A549 (cell line): ENCODE measurements at regions of chr19 and their contacts with region 1.

Region 1: DNA sequence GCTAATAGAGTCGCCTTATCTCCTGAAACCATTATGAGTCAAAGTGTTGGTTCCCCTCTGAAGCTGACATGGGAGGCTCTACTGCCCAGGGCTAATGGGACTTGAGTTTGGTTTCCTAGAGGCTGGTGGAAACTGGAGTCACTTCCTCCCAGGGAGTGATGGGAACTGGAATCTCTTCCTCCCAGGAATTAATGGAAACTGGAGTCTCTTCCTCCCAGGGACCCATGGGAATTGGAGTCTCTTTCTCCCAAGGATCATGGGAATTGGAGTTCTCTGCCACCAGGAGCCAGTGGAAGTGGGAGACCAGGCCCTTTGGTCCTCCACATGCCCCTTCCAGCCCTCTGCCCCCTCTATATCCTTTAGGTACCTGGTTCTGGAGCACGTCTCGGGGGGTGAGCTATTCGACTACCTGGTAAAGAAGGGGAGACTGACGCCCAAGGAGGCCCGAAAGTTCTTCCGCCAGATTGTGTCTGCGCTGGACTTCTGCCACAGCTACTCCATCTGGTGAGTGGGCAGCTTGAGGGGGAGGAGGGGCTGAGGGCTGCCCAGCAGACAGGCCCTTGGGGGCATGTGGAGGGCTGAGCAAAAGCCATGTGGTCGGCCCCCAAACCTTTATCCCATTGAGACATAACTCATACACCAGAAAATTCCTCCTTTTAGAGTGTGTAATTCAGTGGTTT is 5.5 kb downstream of the BRSK1 start:
- DNase-seq: peak in 1 of 2 experiments; percentile 51
- ATAC-seq: peak; percentile 15 to 49; a peak in 4 of 6 replicates
- H3K4me3 ChIP-seq: no peak overlapping the region
- H3K27ac ChIP-seq: no peak overlapping the region
- H3K4me1 ChIP-seq: peaks cover 13% of the 10 kb centered on the region; the same call in 1 of the 3 replicates
- CTCF ChIP-seq: no peak
- EP300 ChIP-seq: no peak
- POLR2A ChIP-seq: no peak
- RAD21 ChIP-seq: no peak

Region 2: DNA sequence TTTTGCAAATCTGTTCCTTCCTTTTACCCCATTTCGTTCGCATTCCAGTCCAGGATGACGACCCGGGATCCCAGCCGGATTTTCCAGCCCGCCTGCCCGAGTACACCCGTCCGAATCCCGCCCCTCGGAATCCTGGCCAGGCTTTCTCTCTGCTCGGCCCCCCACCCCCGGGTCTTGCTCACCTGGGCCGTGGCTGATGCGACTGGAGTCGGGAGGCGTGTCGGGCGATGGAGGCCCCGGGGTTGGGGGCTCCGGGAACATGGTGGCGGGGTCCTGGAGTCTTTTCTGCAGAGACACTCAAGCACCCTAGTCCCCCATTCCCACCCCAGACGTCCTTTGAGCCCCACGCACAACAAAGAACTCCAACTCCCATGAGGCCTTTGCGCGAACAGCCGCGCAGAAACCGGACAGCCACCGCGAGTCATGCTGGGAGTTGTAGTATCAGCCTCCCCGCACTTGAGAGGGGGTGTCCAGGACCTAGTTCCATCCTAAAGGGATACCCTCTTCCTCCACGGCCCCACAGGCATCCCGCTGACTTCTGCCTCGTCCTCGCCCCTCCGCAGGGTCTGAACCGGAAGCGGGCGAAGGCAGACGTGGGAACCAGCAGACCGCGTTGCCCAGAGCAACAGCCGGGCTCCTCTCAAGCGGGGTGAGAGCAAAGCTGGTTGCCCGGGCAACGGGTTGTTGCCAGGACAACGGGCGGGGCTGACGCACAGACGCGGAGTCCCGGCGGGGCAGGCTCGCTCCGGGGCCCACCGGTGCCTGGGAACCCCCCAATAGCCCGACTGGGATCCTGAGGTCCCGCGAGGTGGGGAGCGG is 110.3 kb before region 1 on chr19:
- CTCF ChIA-PET with region 1: interaction called, 11 read pairs
- POLR2A ChIA-PET with region 1: no interaction called
- DNase-seq: peak; percentile 91
- ATAC-seq: peak; percentile 74 to 80
- H3K4me3 ChIP-seq: peak overlapping the region; percentile 26
- H3K27ac ChIP-seq: no peak overlapping the region; a peak in 1 of 6 replicates
- H3K4me1 ChIP-seq: peaks cover 17% of the 10 kb centered on the region
- CTCF ChIP-seq: no peak
- EP300 ChIP-seq: no peak
- POLR2A ChIP-seq: no peak
- RAD21 ChIP-seq: no peak

Region 3: GRCh38 chr19:55312621-55313512 is 23.6 kb after region 1 on chr19:
- CTCF ChIA-PET with region 1: interaction called, 15 read pairs
- POLR2A ChIA-PET with region 1: no interaction called
- DNase-seq: no peak
- ATAC-seq: peak; percentile 10 to 16; a peak in 3 of 6 replicates
- H3K4me3 ChIP-seq: no peak overlapping the region
- H3K27ac ChIP-seq: no peak overlapping the region
- H3K4me1 ChIP-seq: no peaks in the 10 kb centered on the region
- CTCF ChIP-seq: no peak
- EP300 ChIP-seq: no peak
- POLR2A ChIP-seq: no peak
- RAD21 ChIP-seq: no peak

Region 4: DNA sequence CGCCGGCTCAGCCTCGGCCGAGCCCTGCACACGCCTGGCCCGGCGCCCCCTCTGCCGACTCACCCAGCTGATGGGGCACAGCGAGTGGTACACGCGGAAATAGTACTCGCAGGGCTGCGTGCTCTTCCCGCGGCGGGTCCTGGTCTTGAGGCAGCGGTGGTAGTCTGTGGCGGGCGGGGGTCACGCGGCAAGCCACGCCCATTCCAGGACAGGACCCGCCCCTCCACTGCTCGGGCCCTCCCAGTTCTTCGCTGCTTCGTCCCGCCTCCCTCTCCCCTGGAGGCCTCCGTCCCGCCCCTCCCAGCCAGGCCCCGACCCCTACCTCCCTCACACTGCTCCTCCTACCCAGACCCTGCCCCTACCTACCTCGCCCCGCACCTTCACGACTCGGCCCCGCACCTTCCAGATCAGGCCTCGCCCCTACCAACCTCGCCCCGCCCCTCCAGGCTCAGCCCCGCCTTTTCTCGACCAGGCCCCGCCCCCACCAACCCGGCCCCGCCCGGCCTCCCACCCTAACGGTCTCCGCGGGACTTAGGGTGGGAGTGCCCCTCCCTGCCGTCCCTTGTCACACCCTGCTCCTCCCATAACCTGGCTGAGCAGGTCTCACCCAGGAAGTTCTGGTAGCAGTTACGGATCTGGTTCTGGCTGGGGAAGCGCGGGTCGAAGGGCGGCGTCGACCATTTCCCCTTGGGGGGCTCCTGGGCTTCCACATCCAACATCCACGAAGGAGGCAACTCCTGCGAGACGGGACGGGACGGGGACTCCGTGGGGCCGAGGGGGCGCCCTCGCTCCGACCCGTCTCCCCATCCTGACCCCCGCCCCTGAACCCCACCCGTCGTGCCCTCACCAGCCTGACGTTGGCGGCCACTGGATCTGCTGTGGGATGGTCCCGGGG is 64.8 kb after region 1 on chr19:
- CTCF ChIA-PET with region 1: interaction called, 15 read pairs
- POLR2A ChIA-PET with region 1: no interaction called
- DNase-seq: peak; percentile 75 to 90
- ATAC-seq: peak; percentile 75 to 91
- H3K4me3 ChIP-seq: peak overlapping the region; percentile 50
- H3K27ac ChIP-seq: peak overlapping the region; percentile 62 to 84
- H3K4me1 ChIP-seq: peaks cover 12% of the 10 kb centered on the region
- CTCF ChIP-seq: no peak
- EP300 ChIP-seq: no peak
- POLR2A ChIP-seq: no peak
- RAD21 ChIP-seq: no peak

Region 5: GRCh38 chr19:55385740-55386529 is 96.7 kb after region 1 on chr19 and contains the start of gene RPL28:
- CTCF ChIA-PET with region 1: interaction called, 62 read pairs
- POLR2A ChIA-PET with region 1: interaction called, 8 read pairs
- DNase-seq: peak; percentile 92 to 99
- ATAC-seq: peak; percentile 54 to 77
- H3K4me3 ChIP-seq: peak within 1 kb of the TSS; percentile 89
- H3K27ac ChIP-seq: peak within 1 kb of the TSS; percentile 91 to 99
- H3K4me1 ChIP-seq: peaks cover 50% of the 10 kb centered on the region
- CTCF ChIP-seq: no peak
- EP300 ChIP-seq: no peak
- POLR2A ChIP-seq: peak; percentile 100
- RAD21 ChIP-seq: no peak
- polyA plus RNA-seq, gene RPL28: 329 and 351 TPM in 2 replicates

Region 6: DNA sequence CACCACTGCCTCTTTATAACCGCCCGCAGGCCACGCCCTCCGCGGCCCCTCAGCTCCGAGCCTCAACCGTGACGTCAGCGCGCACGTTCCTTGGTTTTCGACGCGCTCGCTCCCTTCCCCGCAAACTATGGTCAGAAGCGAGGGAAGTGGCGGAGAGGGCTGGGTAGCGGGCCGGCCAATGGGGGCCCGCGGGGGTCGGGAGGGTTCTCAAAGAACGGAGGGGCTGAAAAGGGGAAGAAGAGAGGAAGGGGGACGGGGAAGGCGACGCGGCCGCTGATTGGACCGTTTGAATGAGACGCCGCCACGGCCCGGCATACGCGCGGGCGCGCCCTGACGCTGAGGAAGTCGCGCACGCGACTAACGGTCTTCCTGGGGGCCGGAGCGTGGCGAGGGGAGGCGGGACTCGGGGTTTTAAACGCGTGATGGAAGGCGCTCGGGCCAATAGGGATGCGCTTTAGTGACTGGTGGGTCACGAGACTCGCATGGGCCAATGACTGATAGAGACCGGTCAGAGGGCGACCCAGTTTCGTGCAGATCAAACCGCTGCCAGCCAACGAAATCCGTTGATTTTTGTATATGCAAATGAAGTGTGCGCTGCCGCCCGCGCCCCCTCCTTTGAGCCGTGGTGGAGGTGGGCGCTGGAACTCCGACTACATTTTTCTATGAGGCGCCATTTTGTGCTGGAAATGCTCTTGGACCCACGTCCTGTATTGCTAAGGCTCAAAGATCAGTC is 118.7 kb after region 1 on chr19:
- CTCF ChIA-PET with region 1: interaction called, 22 read pairs
- POLR2A ChIA-PET with region 1: interaction called, 7 read pairs
- DNase-seq: peak; percentile 100
- ATAC-seq: peak; percentile 90 to 96
- H3K4me3 ChIP-seq: peak overlapping the region; percentile 98
- H3K27ac ChIP-seq: peak overlapping the region; percentile 95 to 97
- H3K4me1 ChIP-seq: peaks cover 36% of the 10 kb centered on the region
- CTCF ChIP-seq: no peak
- EP300 ChIP-seq: no peak
- POLR2A ChIP-seq: no peak
- RAD21 ChIP-seq: no peak

Region 7: GRCh38 chr19:55460670-55461258 is 171.5 kb after region 1 on chr19:
- CTCF ChIA-PET with region 1: no interaction called
- POLR2A ChIA-PET with region 1: no interaction called
- DNase-seq: peak; percentile 64 to 75
- ATAC-seq: peak in 1 of 2 experiments; percentile 58; a peak in 3 of 6 replicates
- H3K4me3 ChIP-seq: peak overlapping the region; percentile 85
- H3K27ac ChIP-seq: peak overlapping the region; percentile 83 to 90
- H3K4me1 ChIP-seq: peaks cover 14% of the 10 kb centered on the region; the same call in 2 of the 3 replicates
- CTCF ChIP-seq: no peak
- EP300 ChIP-seq: no peak
- POLR2A ChIP-seq: no peak
- RAD21 ChIP-seq: no peak